ENCODE measurements at regions of chr5 and their contacts with region 1.

Region 1: DNA sequence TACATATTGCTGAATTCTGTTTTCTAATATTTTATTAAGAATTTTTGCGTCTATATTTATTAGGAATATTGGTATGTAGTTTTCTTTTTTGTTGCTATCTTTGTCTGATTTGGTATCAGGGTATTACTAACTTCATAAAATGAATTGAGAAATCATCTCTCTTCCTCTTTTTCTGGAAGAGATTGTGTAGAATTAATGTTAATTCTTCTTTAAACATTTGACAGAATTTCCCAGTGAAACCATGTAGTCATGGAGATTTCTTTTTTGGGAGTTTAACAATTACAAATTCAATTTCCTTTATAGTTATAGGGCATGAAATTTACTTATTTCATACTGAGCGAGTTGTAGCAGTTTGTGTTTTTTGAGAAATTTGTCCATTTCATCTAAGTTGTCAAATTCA is 3.3 kb upstream of the FAM170A start:
- DNase-seq: no peak
- H3K4me3 ChIP-seq: no peak overlapping the region
- H3K27ac ChIP-seq: no peak overlapping the region
- H3K4me1 ChIP-seq: no peaks in the 10 kb centered on the region
- H3K27me3 ChIP-seq: no peaks in the 10 kb centered on the region
- CTCF ChIP-seq: no peak
- EP300 ChIP-seq: no peak
- POLR2A ChIP-seq: no peak

Region 2: GRCh38 chr5:120270498-120270897 is 644.4 kb after region 1 on chr5:
- intact Hi-C with region 1: loop called in 1 of 4 experiments (anchors 5 kb)
- DNase-seq: no peak
- H3K4me3 ChIP-seq: no peak overlapping the region
- H3K27ac ChIP-seq: no peak overlapping the region
- H3K4me1 ChIP-seq: no peaks in the 10 kb centered on the region
- H3K27me3 ChIP-seq: no peaks in the 10 kb centered on the region
- CTCF ChIP-seq: no peak
- EP300 ChIP-seq: no peak
- POLR2A ChIP-seq: no peak

Measured in ovary (tissue), 10 donors.